Activated naive CD4-positive, alpha-beta T cell treated with anti-CD3 and anti-CD28 coated beads, Interleukin-2, amount 10 ng/mL, durations not matched to agents 7 days and 5 days (primary cell): ENCODE measurements at regions of chr1 and their contacts with region 1.

Region 1: GRCh38 chr1:84944767-84945486 is 51.9 kb upstream of the LPAR3 start:
- DNase-seq: peak; percentile 82
- H3K4me3 Mint-ChIP-seq: peak overlapping the region; percentile 79
- H3K27ac Mint-ChIP-seq: peak overlapping the region; percentile 91
- H3K4me1 Mint-ChIP-seq: peaks cover 24% of the 10 kb centered on the region
- H3K27me3 Mint-ChIP-seq: peaks cover 8% of the 10 kb centered on the region

Region 2: DNA sequence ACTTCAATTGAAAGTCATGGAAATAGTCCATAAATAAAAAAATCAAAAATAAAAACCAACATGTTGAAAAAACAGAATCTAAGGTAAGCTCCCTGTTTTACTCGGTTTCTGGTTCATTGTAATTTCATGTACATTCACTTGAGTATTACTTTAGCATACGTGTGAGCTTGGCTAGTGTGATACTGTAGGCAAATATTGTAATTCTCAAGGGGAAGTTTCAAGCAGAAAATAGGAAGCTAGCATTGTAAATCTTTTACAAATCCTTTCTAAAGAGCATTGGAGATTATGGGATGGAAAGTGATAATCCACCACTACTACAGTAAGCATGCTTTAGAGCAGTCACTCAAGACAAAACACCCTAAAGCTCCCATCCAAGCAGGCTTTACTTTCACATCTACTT is 48.6 kb before region 1 on chr1:
- CTCF ChIA-PET with region 1: no interaction called
- DNase-seq: no peak
- H3K4me3 Mint-ChIP-seq: no peak overlapping the region
- H3K27ac Mint-ChIP-seq: no peak overlapping the region
- H3K4me1 Mint-ChIP-seq: peaks cover 16% of the 10 kb centered on the region
- H3K27me3 Mint-ChIP-seq: peaks cover 61% of the 10 kb centered on the region

Region 3: GRCh38 chr1:84972377-84972987 is 27.6 kb after region 1 on chr1:
- CTCF ChIA-PET with region 1: interaction called, 17 read pairs
- DNase-seq: no peak
- H3K4me3 Mint-ChIP-seq: no peak overlapping the region
- H3K27ac Mint-ChIP-seq: peak overlapping the region; percentile 58
- H3K4me1 Mint-ChIP-seq: peaks cover 43% of the 10 kb centered on the region
- H3K27me3 Mint-ChIP-seq: no peaks in the 10 kb centered on the region

Region 4: DNA sequence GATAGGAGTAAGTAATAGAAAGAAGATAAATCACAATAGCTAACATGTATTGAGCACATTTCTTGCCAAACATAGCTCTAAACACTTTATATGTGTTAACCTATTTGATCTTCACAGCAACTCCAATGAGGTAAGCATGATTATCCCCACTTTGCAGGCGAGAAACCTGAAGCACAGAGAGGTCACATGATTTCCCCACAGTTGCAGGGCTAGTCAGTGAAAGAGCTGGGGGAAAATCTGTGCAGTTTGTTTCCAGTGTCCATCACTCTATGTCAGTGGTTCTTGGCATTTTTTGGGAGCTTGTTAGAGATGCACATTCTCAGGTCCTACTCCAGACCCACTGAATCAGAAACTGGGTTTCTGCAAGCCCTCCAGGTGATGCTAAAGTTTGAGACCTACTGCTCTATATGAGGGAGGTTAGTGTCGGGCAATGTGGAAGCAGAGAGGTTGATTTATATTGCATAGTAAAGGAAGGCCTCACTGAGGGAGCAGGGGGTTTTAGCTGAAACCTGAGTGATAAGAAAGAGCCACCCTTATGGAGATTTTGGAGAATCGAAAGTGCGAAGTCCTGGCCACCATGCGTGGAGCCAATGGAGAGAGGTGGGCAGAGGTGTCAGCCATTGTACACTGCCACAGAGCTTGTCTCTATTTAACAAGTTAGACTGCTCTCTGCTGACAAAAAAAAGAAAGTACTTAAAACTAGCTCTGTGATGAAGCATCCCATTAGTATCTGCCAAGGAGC is 82.5 kb after region 1 on chr1:
- CTCF ChIA-PET with region 1: interaction called, 108 read pairs
- DNase-seq: peak; percentile 40
- H3K4me3 Mint-ChIP-seq: no peak overlapping the region
- H3K27ac Mint-ChIP-seq: peak overlapping the region; percentile 78
- H3K4me1 Mint-ChIP-seq: peaks cover 13% of the 10 kb centered on the region
- H3K27me3 Mint-ChIP-seq: no peaks in the 10 kb centered on the region

Region 5: GRCh38 chr1:85068846-85069245 is 123.9 kb after region 1 on chr1:
- CTCF ChIA-PET with region 1: interaction called, 10 read pairs
- DNase-seq: no peak
- H3K4me3 Mint-ChIP-seq: no peak overlapping the region
- H3K27ac Mint-ChIP-seq: no peak overlapping the region
- H3K4me1 Mint-ChIP-seq: peaks cover 4% of the 10 kb centered on the region
- H3K27me3 Mint-ChIP-seq: peaks cover 16% of the 10 kb centered on the region

Region 6: DNA sequence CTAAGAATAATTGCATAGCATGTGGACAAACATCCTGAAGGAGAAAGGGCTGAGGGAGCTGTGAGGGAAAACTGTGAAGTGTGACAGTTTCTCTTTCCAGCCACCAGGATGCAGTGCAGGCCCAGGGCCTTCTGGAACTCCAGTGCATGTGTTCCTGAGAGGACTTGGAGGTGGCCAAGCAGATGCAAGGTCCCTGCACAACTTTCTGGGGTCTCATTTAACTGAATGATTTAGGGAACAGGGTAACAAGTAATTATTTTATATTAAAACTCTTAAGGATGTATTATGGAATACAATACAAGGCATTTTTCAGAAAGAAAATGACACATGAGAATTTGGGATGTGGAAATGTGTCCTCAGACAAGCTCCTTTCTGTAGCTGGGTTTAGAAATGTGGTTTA is 164.5 kb after region 1 on chr1:
- CTCF ChIA-PET with region 1: interaction called, 55 read pairs
- DNase-seq: peak; percentile 55
- H3K4me3 Mint-ChIP-seq: no peak overlapping the region
- H3K27ac Mint-ChIP-seq: no peak overlapping the region
- H3K4me1 Mint-ChIP-seq: no peaks in the 10 kb centered on the region
- H3K27me3 Mint-ChIP-seq: peaks cover 16% of the 10 kb centered on the region

Region 7: DNA sequence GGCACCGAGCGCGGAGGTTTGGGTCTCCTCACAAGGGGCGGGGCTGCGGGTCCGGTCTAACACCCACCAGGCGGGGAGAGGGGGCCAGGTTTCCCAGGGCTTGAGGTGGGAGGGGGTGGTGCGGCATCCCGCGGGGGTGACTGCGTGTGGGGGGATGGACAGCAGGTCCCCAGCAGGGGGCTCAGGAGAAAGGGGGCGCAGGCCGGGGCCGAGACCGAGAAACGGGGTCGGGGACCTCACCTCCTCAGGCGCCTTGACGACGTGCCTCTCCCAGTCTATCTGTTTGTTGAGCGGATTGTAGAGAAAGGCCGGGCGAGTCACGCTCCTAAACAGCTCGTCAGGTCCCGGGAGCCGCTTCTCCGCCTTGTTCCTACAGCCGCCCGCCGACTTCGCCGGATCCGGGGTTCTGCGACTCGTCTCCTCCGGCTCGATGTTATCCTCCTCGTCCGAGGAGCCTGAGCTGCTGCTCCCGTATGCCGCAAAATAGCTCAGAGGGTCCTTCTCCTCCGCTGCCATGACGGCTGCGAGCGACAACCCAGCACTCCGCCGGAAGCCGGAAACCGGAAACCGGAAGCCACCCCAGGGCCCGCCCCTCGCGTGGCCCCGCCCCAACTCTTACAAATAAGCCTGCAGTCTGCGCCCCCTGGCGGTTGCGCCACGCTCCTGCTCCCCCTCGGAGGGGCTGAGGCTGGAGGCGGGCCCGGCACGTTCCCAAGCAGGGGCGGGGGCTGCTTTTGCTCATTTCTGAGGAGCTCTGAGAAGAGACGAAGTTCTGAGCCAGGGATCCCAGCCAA is 314.4 kb after region 1 on chr1 and contains the start of gene C1orf52:
- CTCF ChIA-PET with region 1: interaction called, 206 read pairs
- DNase-seq: peak; percentile 96
- H3K4me3 Mint-ChIP-seq: peak within 1 kb of the TSS; percentile 97
- H3K27ac Mint-ChIP-seq: peak within 1 kb of the TSS; percentile 94
- H3K4me1 Mint-ChIP-seq: peaks cover 39% of the 10 kb centered on the region
- H3K27me3 Mint-ChIP-seq: no peaks in the 10 kb centered on the region